Caco-2 (cell line): ENCODE measurements at regions of chr16 and their contacts with region 1.

Region 1: DNA sequence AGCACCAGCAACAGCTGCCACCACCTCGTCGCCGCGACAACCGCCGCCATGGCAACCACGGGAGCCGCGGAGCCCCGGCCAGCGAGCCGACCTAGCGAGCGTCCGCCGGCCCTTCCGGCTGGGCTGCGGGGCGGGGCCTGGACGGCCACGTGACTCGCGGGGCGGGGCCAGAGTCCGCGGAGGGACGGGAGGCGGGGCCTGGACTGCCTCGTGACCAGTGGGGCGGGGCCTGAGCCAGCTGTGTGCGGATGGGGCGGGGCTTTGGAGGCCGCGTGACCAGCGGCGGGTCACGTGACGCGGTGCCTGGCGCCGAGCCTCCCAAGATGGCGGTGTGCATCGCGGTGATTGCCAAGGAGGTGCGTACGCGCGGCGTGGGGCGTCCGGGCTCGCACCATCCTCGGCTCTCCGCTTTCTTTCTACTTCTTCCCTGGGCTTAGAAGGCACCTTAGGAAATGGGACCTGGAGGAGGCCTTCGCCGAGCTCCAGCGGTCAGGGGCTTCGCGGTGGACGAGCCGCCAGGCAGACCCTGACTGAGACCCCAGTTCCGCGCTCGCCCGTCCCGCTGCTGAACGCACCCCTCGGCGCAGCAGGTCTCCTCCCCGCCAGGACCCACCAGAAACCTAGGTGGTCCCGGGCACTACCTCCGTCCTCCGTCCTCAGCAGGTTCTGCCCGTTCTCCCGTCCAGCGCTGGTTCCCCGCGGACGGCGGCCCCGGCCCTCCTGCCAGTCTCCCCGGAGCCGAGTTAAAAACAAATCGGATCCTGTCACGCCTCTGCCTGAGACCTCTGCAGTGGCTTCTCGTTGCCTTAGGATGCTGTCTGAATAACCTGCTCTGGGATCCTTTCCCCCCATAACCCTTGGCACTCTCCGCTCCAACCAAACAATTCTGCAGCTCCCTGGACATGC is at the starts of genes GALNS and TRAPPC2L:
- DNase-seq: peak; percentile 98 to 100
- H3K4me3 ChIP-seq: peak within 1 kb of the TSS; percentile 86
- H3K4me3 Mint-ChIP-seq: peak within 1 kb of the TSS; percentile 95
- H3K27ac Mint-ChIP-seq: peak within 1 kb of the TSS; percentile 98
- H3K4me1 ChIP-seq: peaks cover 11% of the 10 kb centered on the region
- H3K4me1 Mint-ChIP-seq: peaks cover 18% of the 10 kb centered on the region
- H3K27me3 ChIP-seq: no peaks in the 10 kb centered on the region
- H3K27me3 Mint-ChIP-seq: no peaks in the 10 kb centered on the region
- CTCF ChIP-seq: no peak
- total RNA-seq, gene GALNS: 55.3 and 57.8 TPM in 2 replicates
- total RNA-seq, gene TRAPPC2L: 179 and 181 TPM in 2 replicates

Region 2: GRCh38 chr16:88497561-88498462 is 359.3 kb before region 1 on chr16:
- CTCF ChIA-PET with region 1: no interaction called
- POLR2A ChIA-PET with region 1: no interaction called
- intact Hi-C with region 1: loop called (anchors 5 kb)
- DNase-seq: peak; percentile 82 to 93
- H3K4me3 ChIP-seq: no peak overlapping the region
- H3K4me3 Mint-ChIP-seq: peak overlapping the region; percentile 43
- H3K27ac Mint-ChIP-seq: peak overlapping the region; percentile 85
- H3K4me1 ChIP-seq: peaks cover 57% of the 10 kb centered on the region
- H3K4me1 Mint-ChIP-seq: peaks cover 36% of the 10 kb centered on the region
- H3K27me3 ChIP-seq: no peaks in the 10 kb centered on the region
- H3K27me3 Mint-ChIP-seq: no peaks in the 10 kb centered on the region
- CTCF ChIP-seq: no peak

Region 3: GRCh38 chr16:88811769-88812512 is 45.1 kb before region 1 on chr16 and contains the start of gene APRT:
- CTCF ChIA-PET with region 1: interaction called, 15 read pairs
- POLR2A ChIA-PET with region 1: interaction called, 13 read pairs
- intact Hi-C with region 1: loop called (anchors 1 kb)
- DNase-seq: peak; percentile 97 to 99
- H3K4me3 ChIP-seq: peak within 1 kb of the TSS; percentile 96
- H3K4me3 Mint-ChIP-seq: peak within 1 kb of the TSS; percentile 97
- H3K27ac Mint-ChIP-seq: peak within 1 kb of the TSS; percentile 98
- H3K4me1 ChIP-seq: peaks cover 15% of the 10 kb centered on the region
- H3K4me1 Mint-ChIP-seq: no peaks in the 10 kb centered on the region
- H3K27me3 ChIP-seq: no peaks in the 10 kb centered on the region
- H3K27me3 Mint-ChIP-seq: no peaks in the 10 kb centered on the region
- CTCF ChIP-seq: peak in 1 of 2 experiments; percentile 19
- total RNA-seq, gene APRT: 251 and 268 TPM in 2 replicates